Activated naive CD4-positive, alpha-beta T cell treated with anti-CD3 and anti-CD28 coated beads, Interleukin-2, amount 10 ng/mL, durations not matched to agents 7 days and 5 days (primary cell): ENCODE measurements at regions of chr1 and their contacts with region 1.

Region 1: DNA sequence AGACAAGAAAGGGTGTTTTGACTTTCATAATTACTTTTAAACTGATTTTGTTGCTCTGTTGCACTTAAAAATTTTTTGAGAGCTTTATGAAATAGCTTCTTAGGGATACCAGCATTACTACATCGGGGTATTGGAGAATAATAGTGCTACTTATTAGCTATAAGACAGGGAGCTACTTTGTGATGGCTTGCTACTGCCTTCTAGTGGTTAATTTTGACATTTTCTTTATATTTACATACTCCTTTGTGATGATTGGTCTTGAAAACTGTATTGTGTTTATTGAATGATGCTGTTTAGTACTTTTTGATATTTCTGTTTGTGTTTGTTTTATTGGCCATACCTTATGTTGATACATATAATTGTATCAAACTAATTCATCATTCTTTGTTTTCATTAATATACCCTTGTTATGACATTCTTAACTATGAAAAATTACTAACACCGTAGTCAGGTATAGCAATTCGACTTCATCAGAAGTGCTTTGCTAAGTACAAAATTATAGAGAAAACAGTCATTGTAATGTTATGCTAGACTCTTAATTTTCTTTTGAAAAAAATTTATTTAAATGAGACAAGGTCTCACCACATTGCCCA is 85.5 kb downstream of the CLIC4 start:
- DNase-seq: no peak
- H3K4me3 Mint-ChIP-seq: no peak overlapping the region
- H3K27ac Mint-ChIP-seq: no peak overlapping the region
- H3K4me1 Mint-ChIP-seq: no peaks in the 10 kb centered on the region
- H3K27me3 Mint-ChIP-seq: peaks cover 4% of the 10 kb centered on the region

Region 2: DNA sequence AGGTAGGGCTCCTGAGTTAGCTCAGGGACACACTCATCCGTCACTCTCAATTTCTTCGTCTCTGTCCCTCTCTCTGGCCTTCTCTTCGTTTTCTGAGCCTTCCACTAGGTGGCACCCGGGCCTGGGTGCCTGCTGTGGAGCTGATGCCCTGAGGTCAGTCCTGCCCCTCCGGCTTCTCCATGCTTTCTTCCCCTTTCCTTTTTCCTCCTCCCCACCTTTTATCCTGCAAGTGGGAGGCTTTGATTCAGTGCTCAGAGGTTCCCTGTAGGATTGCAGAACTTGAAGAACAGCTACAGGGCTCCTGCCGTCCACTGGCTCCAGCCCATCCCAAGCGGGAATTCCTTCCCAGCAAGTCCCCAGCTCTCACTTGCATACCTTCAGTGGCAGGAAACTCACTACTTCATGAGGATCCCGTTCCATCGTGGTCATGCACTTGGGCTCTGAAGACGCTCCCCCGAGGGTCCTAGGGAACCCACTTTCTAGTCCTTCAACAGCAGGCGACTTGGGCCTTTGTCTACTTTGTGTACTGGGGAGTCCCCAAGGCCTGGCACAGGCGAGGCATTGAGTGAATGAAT is 142.1 kb before region 1 on chr1:
- CTCF ChIA-PET with region 1: interaction called, 194 read pairs
- DNase-seq: peak; percentile 66
- H3K4me3 Mint-ChIP-seq: no peak overlapping the region
- H3K27ac Mint-ChIP-seq: no peak overlapping the region
- H3K4me1 Mint-ChIP-seq: no peaks in the 10 kb centered on the region
- H3K27me3 Mint-ChIP-seq: peaks cover 20% of the 10 kb centered on the region

Region 3: GRCh38 chr1:24696756-24697330 is 133.9 kb before region 1 on chr1:
- CTCF ChIA-PET with region 1: interaction called, 194 read pairs
- DNase-seq: no peak
- H3K4me3 Mint-ChIP-seq: no peak overlapping the region
- H3K27ac Mint-ChIP-seq: no peak overlapping the region
- H3K4me1 Mint-ChIP-seq: peaks cover 16% of the 10 kb centered on the region
- H3K27me3 Mint-ChIP-seq: peaks cover 58% of the 10 kb centered on the region